ENCODE measurements at regions of chr6 and their contacts with region 1.

Region 1: GRCh38 chr6:43421831-43422230 is 5.5 kb upstream of the ABCC10 start:
- DNase-seq: no peak
- H3K27ac ChIP-seq: no peak overlapping the region
- CTCF ChIP-seq: no peak

Region 2: GRCh38 chr6:43347021-43347420 is 74.8 kb before region 1 on chr6:
- CTCF ChIA-PET with region 1: no interaction called
- POLR2A ChIA-PET with region 1: no interaction called
- DNase-seq: no peak
- H3K27ac ChIP-seq: no peak overlapping the region
- CTCF ChIP-seq: no peak

Region 3: GRCh38 chr6:43477235-43478007 is 55.6 kb after region 1 on chr6 and contains the start of gene TJAP1:
- CTCF ChIA-PET with region 1: no interaction called
- POLR2A ChIA-PET with region 1: interaction called, 10 read pairs
- DNase-seq: peak; percentile 91
- H3K27ac ChIP-seq: peak within 1 kb of the TSS; percentile 79
- CTCF ChIP-seq: no peak